ENCODE measurements at regions of chr12 and their contacts with region 1.

Region 1: GRCh38 chr12:88122666-88123065 is 19.2 kb downstream of the CEP290 start:
- DNase-seq: no peak
- ATAC-seq: no peak
- H3K4me3 ChIP-seq: no peak overlapping the region
- H3K27ac ChIP-seq: no peak overlapping the region
- H3K4me1 ChIP-seq: no peaks in the 10 kb centered on the region
- H3K27me3 ChIP-seq: no peaks in the 10 kb centered on the region
- CTCF ChIP-seq: no peak

Region 2: GRCh38 chr12:88044035-88044434 is 78.6 kb before region 1 on chr12:
- intact Hi-C with region 1: no loop called
- DNase-seq: no peak
- ATAC-seq: no peak
- H3K4me3 ChIP-seq: no peak overlapping the region
- H3K27ac ChIP-seq: no peak overlapping the region
- H3K4me1 ChIP-seq: no peaks in the 10 kb centered on the region
- H3K27me3 ChIP-seq: no peaks in the 10 kb centered on the region
- CTCF ChIP-seq: no peak

Region 3: DNA sequence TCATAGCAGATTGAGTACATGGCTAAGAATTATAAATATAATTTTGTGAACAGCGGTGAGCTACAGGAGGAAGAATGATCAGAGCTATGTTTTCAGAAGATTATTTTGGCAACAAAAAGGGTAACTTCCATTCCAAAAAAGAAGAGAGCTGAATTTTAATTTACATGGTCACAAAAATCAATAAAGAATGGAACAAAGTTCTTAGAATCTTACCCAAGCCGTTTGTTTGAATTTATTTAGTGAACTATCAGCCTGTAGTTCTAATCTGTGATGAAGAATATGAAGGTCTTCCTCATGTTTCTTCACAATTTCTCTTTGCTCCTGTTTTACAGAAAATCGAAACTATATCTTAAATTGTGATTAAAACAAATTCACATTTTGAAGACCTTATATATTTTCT is 39.0 kb before region 1 on chr12:
- intact Hi-C with region 1: loop called in 1 of 2 experiments (anchors 5 kb)
- DNase-seq: no peak
- ATAC-seq: no peak
- H3K4me3 ChIP-seq: no peak overlapping the region
- H3K27ac ChIP-seq: no peak overlapping the region
- H3K4me1 ChIP-seq: no peaks in the 10 kb centered on the region
- H3K27me3 ChIP-seq: no peaks in the 10 kb centered on the region
- CTCF ChIP-seq: no peak

Measured in psoas muscle (tissue), 8 donors.